Naive thymus-derived CD4-positive, alpha-beta T cell (primary cell): ENCODE measurements at regions of chr11 and their contacts with region 1.

Region 1: GRCh38 chr11:61004180-61004611 is 32.7 kb downstream of the CD6 start:
- DNase-seq: peak in 5 of 9 donors; percentile 53 to 64 (median 54)
- ATAC-seq: peak; percentile 59
- H3K4me3 ChIP-seq: peak overlapping the region; percentile 14
- H3K4me3 Mint-ChIP-seq: peak overlapping the region; percentile 79 to 87 (median 82)
- H3K27ac ChIP-seq: peak overlapping the region; percentile 65
- H3K27ac Mint-ChIP-seq: peak overlapping the region; percentile 84 to 97 (median 95)
- H3K4me1 ChIP-seq: peaks cover 16 to 70% of the 10 kb centered on the region in 2 donors
- H3K4me1 Mint-ChIP-seq: peaks cover 59 to 90% (median 77%) of the 10 kb centered on the region in 7 donors
- H3K27me3 ChIP-seq: no peaks in the 10 kb centered on the region
- H3K27me3 Mint-ChIP-seq: no peaks in the 10 kb centered on the region

Region 2: GRCh38 chr11:60992842-60993409 is 11.3 kb before region 1 on chr11:
- CTCF ChIA-PET with region 1: no interaction called
- POLR2A ChIA-PET with region 1: no interaction called
- intact Hi-C with region 1: loop called (anchors 1 kb)
- DNase-seq: no peak
- ATAC-seq: no peak
- H3K4me3 ChIP-seq: no peak overlapping the region
- H3K4me3 Mint-ChIP-seq: peak overlapping the region; percentile 42 to 74 (median 67)
- H3K27ac ChIP-seq: peak overlapping the region; percentile 36
- H3K27ac Mint-ChIP-seq: peak overlapping the region; percentile 81 to 93 (median 91)
- H3K4me1 ChIP-seq: peaks cover 26 to 75% of the 10 kb centered on the region in 2 donors
- H3K4me1 Mint-ChIP-seq: peaks cover 35 to 92% (median 85%) of the 10 kb centered on the region in 7 donors
- H3K27me3 ChIP-seq: no peaks in the 10 kb centered on the region
- H3K27me3 Mint-ChIP-seq: no peaks in the 10 kb centered on the region

Region 3: DNA sequence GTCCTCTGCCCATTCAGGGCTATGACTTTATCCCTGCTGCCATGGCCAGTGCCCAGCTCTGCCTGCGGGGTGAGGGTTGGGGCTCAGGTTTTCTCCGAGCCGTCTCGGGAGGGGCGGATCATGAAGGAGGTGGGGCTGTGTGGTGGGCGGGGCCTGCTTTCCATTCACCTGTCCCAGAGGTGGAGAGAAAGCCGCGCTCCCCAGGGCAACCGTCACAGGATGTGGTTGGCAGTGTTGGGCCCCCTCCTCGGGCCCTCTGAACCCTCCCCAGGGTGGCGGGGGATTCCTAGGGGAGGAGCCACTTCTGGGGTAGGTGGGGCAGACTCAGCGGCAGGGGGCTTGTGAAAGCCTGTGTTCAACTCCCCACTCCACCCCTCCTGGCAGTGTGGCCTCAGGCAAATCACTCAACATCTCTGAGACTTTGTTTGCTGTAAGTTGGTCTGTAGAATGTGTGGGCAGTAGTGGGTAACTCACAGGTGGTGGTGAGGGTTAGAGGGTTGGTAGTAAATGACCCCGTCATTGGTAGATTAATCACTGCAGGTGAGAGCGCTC is 17.5 kb after region 1 on chr11:
- CTCF ChIA-PET with region 1: no interaction called
- POLR2A ChIA-PET with region 1: interaction called, 26 read pairs
- intact Hi-C with region 1: loop called in 1 of 2 experiments (anchors 1 kb)
- DNase-seq: peak; percentile 72 to 98 (median 96)
- ATAC-seq: peak; percentile 91
- H3K4me3 ChIP-seq: peak overlapping the region; percentile 53
- H3K4me3 Mint-ChIP-seq: peak overlapping the region; percentile 68 to 90 (median 81)
- H3K27ac ChIP-seq: peak overlapping the region; percentile 82
- H3K27ac Mint-ChIP-seq: peak overlapping the region; percentile 88 to 100 (median 98)
- H3K4me1 ChIP-seq: peaks cover 49 to 56% of the 10 kb centered on the region in 2 donors
- H3K4me1 Mint-ChIP-seq: peaks cover 40 to 79% (median 76%) of the 10 kb centered on the region in 7 donors
- H3K27me3 ChIP-seq: no peaks in the 10 kb centered on the region
- H3K27me3 Mint-ChIP-seq: no peaks in the 10 kb centered on the region